A549 (cell line): ENCODE measurements at regions of chr17 and their contacts with region 1.

Region 1: DNA sequence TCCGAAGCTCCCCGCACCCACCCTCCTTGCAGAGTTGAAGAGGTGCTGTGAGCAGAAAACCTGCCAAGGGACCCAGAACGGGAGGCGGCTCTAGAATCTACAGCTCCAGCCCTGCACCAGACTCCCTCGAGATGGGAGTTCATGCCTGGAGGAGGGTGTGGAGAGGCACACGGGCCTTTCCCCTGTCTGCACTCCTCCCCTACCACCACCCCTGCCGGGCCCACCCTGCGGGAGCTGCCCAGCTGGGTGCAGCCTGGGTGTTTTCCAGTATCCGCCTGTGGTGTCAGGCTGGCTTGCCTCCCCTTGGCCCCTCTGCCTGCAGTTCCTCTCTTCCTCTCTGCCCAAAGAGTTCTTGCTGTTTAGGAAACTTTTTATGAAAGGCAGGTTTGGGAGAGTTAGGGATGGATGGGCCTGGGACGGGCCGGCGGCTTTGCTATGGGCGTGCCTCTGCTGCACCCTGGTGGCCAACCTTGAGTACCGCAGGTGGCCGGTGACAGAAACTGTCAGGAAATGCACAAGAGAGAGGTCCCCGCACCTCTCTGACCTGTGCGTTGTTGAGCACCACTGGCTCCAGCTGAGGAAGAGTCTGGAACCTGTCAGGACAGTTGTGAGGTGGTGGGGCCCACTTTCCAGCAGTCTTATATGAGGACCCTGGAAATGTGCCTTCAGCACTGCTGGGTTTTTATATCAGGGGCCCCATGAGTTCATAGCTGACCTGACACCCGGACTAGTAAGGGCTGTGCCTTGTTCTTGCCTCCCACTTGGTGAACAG is 354.1 kb downstream of the SEC14L1 start:
- DNase-seq: peak; percentile 77 to 92
- ATAC-seq: peak; percentile 60 to 83
- H3K4me3 ChIP-seq: no peak overlapping the region
- H3K27ac ChIP-seq: peak overlapping the region in 1 of 2 experiments; percentile 37; a peak in 2 of 6 replicates
- H3K4me1 ChIP-seq: no peaks in the 10 kb centered on the region
- CTCF ChIP-seq: peak; percentile 94
- EP300 ChIP-seq: no peak
- POLR2A ChIP-seq: no peak
- RAD21 ChIP-seq: peak; percentile 97 to 98

Region 2: GRCh38 chr17:77303620-77304019 is 191.2 kb before region 1 on chr17:
- CTCF ChIA-PET with region 1: no interaction called
- POLR2A ChIA-PET with region 1: no interaction called
- DNase-seq: no peak
- ATAC-seq: no peak
- H3K4me3 ChIP-seq: no peak overlapping the region
- H3K27ac ChIP-seq: peak overlapping the region; percentile 61 to 88; a peak in 5 of 6 replicates
- H3K4me1 ChIP-seq: peaks cover 97% of the 10 kb centered on the region
- CTCF ChIP-seq: no peak
- EP300 ChIP-seq: no peak
- POLR2A ChIP-seq: no peak
- RAD21 ChIP-seq: no peak

Region 3: DNA sequence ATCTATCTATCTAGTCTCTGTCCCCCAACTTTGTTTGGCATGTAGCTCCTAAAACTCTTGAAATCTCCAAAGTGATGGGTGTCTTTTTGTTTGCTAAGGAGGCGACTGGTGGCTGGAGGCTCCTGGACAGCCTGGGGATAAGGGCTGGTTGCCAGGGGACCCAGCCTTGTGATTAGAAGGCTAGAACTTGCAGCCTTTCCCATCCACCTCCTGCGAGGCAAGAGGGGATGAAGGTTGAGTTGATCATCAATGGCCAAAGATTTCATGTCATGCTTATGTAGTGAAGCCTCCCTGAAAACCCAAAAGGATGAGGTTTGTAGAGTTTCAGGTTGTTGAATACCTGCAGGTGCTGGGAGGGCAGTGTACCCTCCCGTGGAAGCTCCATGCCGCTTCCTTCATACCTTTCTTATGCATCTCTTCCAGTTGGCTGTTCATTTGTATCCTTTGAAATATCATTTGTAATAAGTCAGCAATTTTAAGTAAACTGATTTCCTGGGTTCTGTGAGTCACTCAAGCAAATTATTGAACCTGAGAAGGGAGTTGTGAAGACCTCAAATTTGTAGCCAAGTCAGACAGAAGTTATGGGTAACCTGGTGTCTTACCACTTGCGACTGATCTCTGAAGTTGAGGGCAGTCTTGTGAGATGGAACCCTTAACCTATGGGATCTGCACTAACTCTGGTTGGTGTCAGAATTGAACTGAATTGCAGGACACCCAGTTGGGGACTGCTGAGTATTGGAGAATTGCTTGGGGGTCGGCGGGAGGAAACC is 151.6 kb before region 1 on chr17:
- CTCF ChIA-PET with region 1: interaction called, 10 read pairs
- POLR2A ChIA-PET with region 1: no interaction called
- DNase-seq: no peak
- ATAC-seq: no peak
- H3K4me3 ChIP-seq: no peak overlapping the region
- H3K27ac ChIP-seq: no peak overlapping the region
- H3K4me1 ChIP-seq: 0 out of 3 replicates have a peak, but pooled peaks cover 4% of the 10 kb centered on the region
- CTCF ChIP-seq: no peak
- EP300 ChIP-seq: no peak
- POLR2A ChIP-seq: no peak
- RAD21 ChIP-seq: no peak

Region 4: DNA sequence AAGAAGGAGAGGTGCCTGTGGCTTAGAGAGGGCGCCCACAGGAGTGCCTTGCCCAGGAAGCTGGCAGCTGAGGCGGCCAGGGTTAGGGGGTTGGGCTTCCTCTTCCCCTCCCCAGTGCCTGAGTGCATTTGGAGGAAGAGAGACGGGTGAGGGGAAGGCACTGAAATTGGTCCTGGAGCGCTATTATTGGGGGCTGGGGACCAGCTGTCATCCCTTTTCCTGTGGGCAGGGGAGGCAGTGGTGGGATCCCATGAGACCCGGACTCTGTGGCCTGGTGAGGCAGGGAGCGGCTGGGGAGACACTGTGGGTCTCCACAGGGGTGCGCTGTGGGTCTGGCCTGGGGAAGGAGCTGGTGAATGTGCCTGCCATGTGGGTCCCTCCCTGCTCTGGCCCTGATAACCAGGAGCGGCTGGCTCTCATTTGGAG is 94.4 kb before region 1 on chr17:
- CTCF ChIA-PET with region 1: interaction called, 10 read pairs
- POLR2A ChIA-PET with region 1: no interaction called
- DNase-seq: no peak
- ATAC-seq: peak; percentile 62 to 76; a peak in 5 of 6 replicates
- H3K4me3 ChIP-seq: no peak overlapping the region
- H3K27ac ChIP-seq: peak overlapping the region in 1 of 2 experiments; percentile 33; a peak in 3 of 6 replicates
- H3K4me1 ChIP-seq: peaks cover 14% of the 10 kb centered on the region; the same call in 1 of the 3 replicates
- CTCF ChIP-seq: peak; percentile 18; the same call in 2 of the 3 replicates
- EP300 ChIP-seq: no peak
- POLR2A ChIP-seq: no peak
- RAD21 ChIP-seq: peak; percentile 43 to 58; a peak in 3 of 5 replicates

Region 5: GRCh38 chr17:77429919-77430752 is 64.7 kb before region 1 on chr17:
- CTCF ChIA-PET with region 1: interaction called, 141 read pairs
- POLR2A ChIA-PET with region 1: no interaction called
- DNase-seq: peak; percentile 84 to 88
- ATAC-seq: peak; percentile 28 to 58
- H3K4me3 ChIP-seq: no peak overlapping the region
- H3K27ac ChIP-seq: peak overlapping the region; percentile 75 to 95
- H3K4me1 ChIP-seq: peaks cover 60% of the 10 kb centered on the region
- CTCF ChIP-seq: peak; percentile 81
- EP300 ChIP-seq: 0 out of 5 replicates have a peak, but pooled peaks of 1 of the 2 experiments have one; percentile 0
- POLR2A ChIP-seq: no peak
- RAD21 ChIP-seq: peak; percentile 83 to 84

Region 6: GRCh38 chr17:77460514-77461046 is 34.3 kb before region 1 on chr17:
- CTCF ChIA-PET with region 1: interaction called, 15 read pairs
- POLR2A ChIA-PET with region 1: no interaction called
- DNase-seq: no peak
- ATAC-seq: no peak
- H3K4me3 ChIP-seq: no peak overlapping the region
- H3K27ac ChIP-seq: peak overlapping the region in 1 of 2 experiments; percentile 19; a peak in 1 of 6 replicates
- H3K4me1 ChIP-seq: peaks cover 8% of the 10 kb centered on the region; the same call in 2 of the 3 replicates
- CTCF ChIP-seq: no peak
- EP300 ChIP-seq: no peak
- POLR2A ChIP-seq: no peak
- RAD21 ChIP-seq: no peak

Region 7: GRCh38 chr17:77507111-77507885 is 12.4 kb after region 1 on chr17:
- CTCF ChIA-PET with region 1: interaction called, 64 read pairs
- POLR2A ChIA-PET with region 1: no interaction called
- DNase-seq: no peak
- ATAC-seq: peak; percentile 42 to 43; a peak in 5 of 6 replicates
- H3K4me3 ChIP-seq: no peak overlapping the region
- H3K27ac ChIP-seq: peak overlapping the region; percentile 25 to 65; a peak in 4 of 6 replicates
- H3K4me1 ChIP-seq: peaks cover 13% of the 10 kb centered on the region
- CTCF ChIP-seq: no peak
- EP300 ChIP-seq: no peak
- POLR2A ChIP-seq: no peak
- RAD21 ChIP-seq: peak in 1 of 2 experiments; percentile 19; a peak in 2 of 5 replicates